SK-N-SH (cell line): ENCODE measurements at regions of chr9 and their contacts with region 1.

Region 1: DNA sequence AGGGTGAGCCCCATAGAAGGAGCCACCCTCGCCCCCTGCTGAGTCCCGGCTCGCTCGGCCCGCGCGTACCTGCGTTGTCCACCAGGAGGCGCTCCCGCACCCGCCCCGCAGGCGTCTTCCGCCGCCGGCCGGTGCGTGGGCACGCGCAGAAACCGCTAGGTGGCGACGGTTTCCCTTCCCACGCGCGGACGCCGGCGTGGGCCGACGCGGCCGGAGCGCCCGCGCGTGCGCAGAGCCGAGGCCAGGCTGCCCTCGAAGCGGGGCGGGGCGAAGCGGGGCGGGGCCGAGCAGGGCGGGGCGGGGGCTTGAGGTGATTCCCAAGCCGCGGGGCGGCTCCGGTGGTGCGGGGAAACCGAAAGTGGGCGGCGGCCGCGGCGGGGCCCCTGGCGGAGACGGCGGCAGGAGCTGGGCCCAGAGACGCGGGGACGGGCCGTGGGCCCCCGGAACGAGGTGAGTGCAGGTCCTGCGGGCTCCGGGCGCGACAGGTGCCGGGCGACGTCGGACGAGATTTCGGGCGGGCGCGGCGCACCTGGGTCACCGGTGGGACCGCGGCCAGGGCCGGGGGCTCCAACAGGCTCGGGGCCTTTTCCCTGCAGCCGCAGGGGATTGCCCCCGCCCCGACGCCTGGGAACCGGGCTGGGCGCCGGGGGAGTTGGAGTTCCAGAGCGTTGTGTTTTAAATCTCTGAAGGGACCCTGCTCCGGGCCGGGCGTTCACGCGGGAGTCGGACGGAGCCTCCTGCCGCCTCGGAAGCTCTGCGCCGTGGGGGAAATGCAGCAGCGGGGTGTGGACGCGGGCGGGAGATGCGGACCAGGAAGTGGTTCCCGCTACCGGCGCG is at the start of gene TDRD7:
- DNase-seq: peak; percentile 98
- H3K4me3 ChIP-seq: peak within 1 kb of the TSS; percentile 79 to 94
- H3K27ac ChIP-seq: peak within 1 kb of the TSS in 1 of 2 experiments; percentile 11; a peak in 2 of 4 replicates
- H3K4me1 ChIP-seq: peaks cover 8 to 13% of the 10 kb centered on the region in 2 experiments; a peak in 3 of 4 replicates
- H3K27me3 ChIP-seq: no peaks in the 10 kb centered on the region
- CTCF ChIP-seq: peak; percentile 93
- EP300 ChIP-seq: no peak; a peak in 1 of 4 replicates
- RAD21 ChIP-seq: peak; percentile 65
- polyA plus RNA-seq, gene TDRD7: 4.9 and 5.8 TPM in 2 replicates

Region 2: DNA sequence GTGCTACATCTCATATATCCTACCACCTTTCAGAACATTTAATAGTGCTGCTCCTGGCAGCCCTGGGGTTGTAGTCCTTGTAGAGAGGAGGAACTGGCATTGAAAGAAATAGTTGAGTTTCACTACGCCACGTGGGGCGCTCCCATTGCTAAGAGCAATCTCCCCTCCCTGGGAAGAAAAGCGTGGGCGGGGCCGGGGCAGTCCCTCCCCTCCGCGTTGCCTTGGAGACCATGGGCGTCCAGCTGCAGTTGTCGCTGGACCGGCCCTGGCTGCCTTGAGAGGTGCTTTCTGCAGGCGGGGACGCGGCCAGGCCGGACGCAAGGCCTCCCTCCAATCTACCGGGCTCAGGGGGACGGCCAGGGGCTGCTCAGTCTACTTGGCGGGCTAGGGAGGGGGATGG is 104.9 kb before region 1 on chr9:
- CTCF ChIA-PET with region 1: no interaction called
- POLR2A ChIA-PET with region 1: no interaction called
- DNase-seq: peak; percentile 34
- H3K4me3 ChIP-seq: no peak overlapping the region
- H3K27ac ChIP-seq: no peak overlapping the region
- H3K4me1 ChIP-seq: no peaks in the 10 kb centered on the region
- H3K27me3 ChIP-seq: no peaks in the 10 kb centered on the region
- CTCF ChIP-seq: no peak
- EP300 ChIP-seq: no peak
- RAD21 ChIP-seq: no peak

Region 3: DNA sequence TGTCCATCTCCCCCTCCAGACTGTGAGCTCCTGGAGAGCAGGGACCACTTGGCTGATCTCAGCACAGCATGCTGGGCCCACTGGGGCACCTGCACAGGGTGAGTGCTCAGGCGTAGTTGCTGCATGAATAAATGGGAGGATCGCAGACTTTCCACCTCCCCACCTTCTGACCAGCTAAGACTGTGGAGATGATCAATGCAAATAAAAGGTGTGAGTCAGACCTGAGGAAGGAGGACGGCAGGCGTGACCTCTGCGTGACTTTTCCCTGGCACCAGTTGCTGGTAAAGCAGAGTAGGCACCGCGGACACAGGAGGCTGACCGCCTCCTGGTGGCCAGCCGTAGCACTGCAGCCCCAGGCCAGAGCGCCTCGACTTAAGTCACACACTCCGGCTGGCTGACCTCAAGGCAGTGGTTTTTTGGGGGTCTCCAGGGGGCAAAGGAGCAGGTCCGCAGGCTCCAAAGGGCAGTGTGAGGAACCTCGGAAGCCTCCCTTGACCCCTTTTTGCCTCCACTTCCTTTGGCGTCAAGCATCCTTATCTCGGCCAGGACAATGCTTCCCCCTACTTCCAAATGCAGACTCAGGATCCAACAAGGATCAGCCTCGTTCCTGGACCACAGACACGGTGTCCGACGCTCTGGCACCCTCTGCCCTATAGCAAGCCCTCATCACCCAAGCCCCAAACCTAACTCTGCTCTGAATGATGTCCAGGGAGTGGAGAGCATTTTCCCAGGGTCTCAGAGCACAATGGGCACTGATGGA is 12.8 kb before region 1 on chr9:
- CTCF ChIA-PET with region 1: interaction called, 25 read pairs
- POLR2A ChIA-PET with region 1: no interaction called
- DNase-seq: peak; percentile 82
- H3K4me3 ChIP-seq: peak overlapping the region in 1 of 2 experiments; percentile 36; a peak in 1 of 4 replicates
- H3K27ac ChIP-seq: no peak overlapping the region
- H3K4me1 ChIP-seq: peaks cover 3 to 4% of the 10 kb centered on the region in 2 experiments; a peak in 1 of 4 replicates
- H3K27me3 ChIP-seq: no peaks in the 10 kb centered on the region
- CTCF ChIP-seq: peak; percentile 88
- EP300 ChIP-seq: no peak
- RAD21 ChIP-seq: peak; percentile 82